Activated B cell treated with CpG ODN at 0.5 μM for 24 hours (primary cell): ENCODE measurements at regions of chr11 and their contacts with region 1.

Region 1: DNA sequence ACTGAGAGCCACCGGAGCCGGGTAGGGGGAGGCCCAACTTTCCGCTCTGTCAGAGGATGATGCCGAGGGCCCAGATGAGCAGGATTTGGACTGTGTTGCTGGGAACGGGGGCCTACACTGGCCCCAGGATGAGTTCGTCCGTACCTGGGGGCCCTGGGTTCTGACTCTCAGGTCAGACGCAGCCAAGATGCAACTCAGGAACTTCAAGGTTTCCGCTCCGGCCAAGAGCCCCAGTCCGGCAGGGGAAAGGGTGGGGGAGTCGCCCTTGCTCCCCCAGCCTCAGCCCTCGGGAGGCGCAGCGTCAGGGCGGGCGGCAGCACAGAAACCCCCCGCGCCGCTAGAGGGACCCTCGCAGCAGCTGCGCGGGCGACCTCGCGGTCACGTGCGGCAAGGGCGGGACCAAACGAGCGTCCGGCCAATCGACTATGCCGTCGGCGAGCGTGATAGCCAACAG is 241 bp upstream of the ARL2 start:
- DNase-seq: peak; percentile 84
- ATAC-seq: peak; percentile 83
- H3K4me3 Mint-ChIP-seq: peak overlapping the region; percentile 90
- H3K27ac Mint-ChIP-seq: peak overlapping the region; percentile 96
- H3K4me1 Mint-ChIP-seq: peaks cover 26% of the 10 kb centered on the region
- H3K27me3 Mint-ChIP-seq: no peaks in the 10 kb centered on the region
- CTCF ChIP-seq: no peak

Region 2: DNA sequence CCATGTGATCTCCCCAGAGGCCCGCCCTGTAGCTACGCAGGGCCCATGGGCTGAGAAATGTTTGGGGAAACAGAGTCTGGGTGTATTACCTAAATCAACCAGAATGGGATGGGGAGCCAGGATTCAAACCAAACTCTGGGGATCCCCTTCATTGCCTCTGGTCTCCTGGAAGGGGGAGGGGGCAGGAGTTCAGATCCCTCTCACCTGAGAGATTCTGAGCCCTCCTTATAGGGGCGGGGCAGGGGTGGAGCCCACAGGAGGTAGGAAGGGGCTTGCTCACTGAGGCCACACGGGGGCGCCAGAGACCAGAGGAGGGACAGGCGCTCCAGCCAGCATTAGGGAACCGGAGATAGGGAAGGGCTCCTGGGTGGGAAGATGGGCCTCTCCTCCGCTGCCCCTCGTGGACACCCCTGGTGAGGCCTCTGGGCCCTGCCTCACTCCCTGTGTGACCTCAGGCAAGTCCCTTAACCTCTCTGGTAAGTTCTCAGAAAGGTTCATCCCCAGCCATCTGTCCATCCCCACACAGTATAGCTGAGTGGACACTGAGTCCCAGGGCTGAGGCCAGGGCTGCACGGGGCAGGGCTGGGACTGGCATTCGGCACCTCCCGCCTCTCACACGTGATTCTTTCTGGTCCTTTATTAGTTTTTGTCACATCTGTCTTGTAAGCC is 166.6 kb before region 1 on chr11:
- CTCF ChIA-PET with region 1: interaction called, 15 read pairs
- POLR2A ChIA-PET with region 1: interaction called, 11 read pairs
- intact Hi-C with region 1: loop called (anchors 1 kb)
- DNase-seq: peak; percentile 90
- ATAC-seq: peak; percentile 21
- H3K4me3 Mint-ChIP-seq: no peak overlapping the region
- H3K27ac Mint-ChIP-seq: peak overlapping the region; percentile 61
- H3K4me1 Mint-ChIP-seq: peaks cover 64% of the 10 kb centered on the region
- H3K27me3 Mint-ChIP-seq: no peaks in the 10 kb centered on the region
- CTCF ChIP-seq: peak; percentile 46

Region 3: GRCh38 chr11:64971421-64972233 is 42.1 kb before region 1 on chr11 and contains the start of gene MAJIN:
- CTCF ChIA-PET with region 1: no interaction called
- POLR2A ChIA-PET with region 1: interaction called, 3 read pairs
- intact Hi-C with region 1: loop called (anchors 5 kb)
- DNase-seq: peak; percentile 83
- ATAC-seq: peak; percentile 77
- H3K4me3 Mint-ChIP-seq: peak within 1 kb of the TSS; percentile 80
- H3K27ac Mint-ChIP-seq: peak within 1 kb of the TSS; percentile 84
- H3K4me1 Mint-ChIP-seq: peaks cover 34% of the 10 kb centered on the region
- H3K27me3 Mint-ChIP-seq: no peaks in the 10 kb centered on the region
- CTCF ChIP-seq: no peak
- total RNA-seq, gene MAJIN: 0.20 and 1.5 TPM in 2 replicates

Region 4: GRCh38 chr11:65060913-65061408 is 47.2 kb after region 1 on chr11:
- CTCF ChIA-PET with region 1: no interaction called
- POLR2A ChIA-PET with region 1: no interaction called
- intact Hi-C with region 1: no loop called
- DNase-seq: no peak
- ATAC-seq: no peak
- H3K4me3 Mint-ChIP-seq: no peak overlapping the region
- H3K27ac Mint-ChIP-seq: no peak overlapping the region
- H3K4me1 Mint-ChIP-seq: no peaks in the 10 kb centered on the region
- H3K27me3 Mint-ChIP-seq: peaks cover 1% of the 10 kb centered on the region
- CTCF ChIP-seq: no peak

Region 5: DNA sequence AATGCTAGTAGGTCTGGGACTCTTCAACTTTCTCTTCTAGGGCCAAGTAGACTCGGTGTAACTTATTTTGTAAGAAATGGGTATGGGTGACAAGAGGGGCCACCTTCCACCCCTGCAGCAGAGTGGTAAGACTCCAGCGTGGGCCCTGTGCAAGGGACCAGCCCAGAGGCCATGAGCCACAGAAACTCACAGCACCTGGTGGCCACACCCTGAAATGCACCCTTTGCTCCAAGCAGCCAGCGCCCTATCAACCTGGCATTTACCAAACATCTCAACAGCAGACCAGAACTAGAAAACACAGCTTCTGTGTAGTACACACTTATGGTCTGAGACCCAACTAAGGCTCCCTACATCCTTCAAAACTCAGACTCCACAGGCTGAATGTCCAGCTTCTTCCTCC is 64.4 kb after region 1 on chr11:
- CTCF ChIA-PET with region 1: interaction called, 3 read pairs
- POLR2A ChIA-PET with region 1: no interaction called
- intact Hi-C with region 1: loop called (anchors 1 kb)
- DNase-seq: peak; percentile 51
- ATAC-seq: peak; percentile 99
- H3K4me3 Mint-ChIP-seq: no peak overlapping the region
- H3K27ac Mint-ChIP-seq: peak overlapping the region; percentile 41
- H3K4me1 Mint-ChIP-seq: peaks cover 10% of the 10 kb centered on the region
- H3K27me3 Mint-ChIP-seq: no peaks in the 10 kb centered on the region
- CTCF ChIP-seq: no peak

Region 6: DNA sequence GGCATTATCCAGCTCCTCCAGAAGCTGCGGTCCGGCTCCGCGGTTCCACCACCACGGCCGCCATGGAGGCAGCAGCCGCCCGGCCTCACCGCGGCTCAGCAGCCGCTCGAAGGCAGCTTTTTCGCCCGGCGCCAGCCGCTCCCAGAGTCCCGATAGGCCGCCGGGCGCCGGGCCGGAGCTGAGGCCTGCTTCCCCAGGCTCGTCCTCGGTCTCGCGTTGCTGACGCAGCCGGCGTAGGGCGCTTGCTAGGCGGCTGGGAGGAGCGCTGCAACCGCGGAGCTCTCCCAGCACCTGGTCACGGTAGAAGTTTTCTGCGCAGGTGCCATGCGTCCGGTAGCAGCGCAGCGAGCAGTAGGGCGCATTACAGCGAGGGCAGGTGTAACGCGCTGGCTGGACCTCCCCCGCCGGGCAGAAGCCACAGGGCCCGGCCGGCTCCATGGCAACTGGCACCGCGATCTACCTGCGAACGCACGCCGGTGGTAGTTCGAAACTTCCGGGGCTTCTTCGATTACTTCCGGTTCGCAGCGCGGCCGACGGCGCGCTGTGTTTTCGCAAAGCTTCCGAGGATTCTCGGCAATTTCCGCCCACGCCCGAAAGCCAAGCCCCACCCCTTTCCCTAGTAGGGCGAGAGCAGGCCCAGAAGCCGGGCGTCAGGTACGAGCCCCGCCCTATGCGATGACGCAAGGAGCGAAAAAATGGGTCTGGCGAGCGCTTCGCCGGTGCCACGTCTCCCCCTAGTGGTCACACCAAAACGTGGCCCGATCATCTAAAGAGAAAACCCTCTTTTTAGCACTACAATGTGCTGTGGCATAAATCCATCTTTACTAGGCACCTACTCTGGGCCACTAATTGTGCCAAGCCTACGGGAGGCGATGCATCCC is 103.7 kb after region 1 on chr11 and contains the start of gene ZNHIT2:
- CTCF ChIA-PET with region 1: interaction called, 12 read pairs
- POLR2A ChIA-PET with region 1: interaction called, 12 read pairs
- intact Hi-C with region 1: loop called (anchors 1 kb)
- DNase-seq: peak; percentile 98
- ATAC-seq: peak; percentile 70
- H3K4me3 Mint-ChIP-seq: peak within 1 kb of the TSS; percentile 87
- H3K27ac Mint-ChIP-seq: peak within 1 kb of the TSS; percentile 89
- H3K4me1 Mint-ChIP-seq: peaks cover 76% of the 10 kb centered on the region
- H3K27me3 Mint-ChIP-seq: no peaks in the 10 kb centered on the region
- CTCF ChIP-seq: peak; percentile 34
- total RNA-seq, gene ZNHIT2: 11.3 and 13.4 TPM in 2 replicates

Region 7: GRCh38 chr11:65314501-65315203 is 300.9 kb after region 1 on chr11 and contains the start of gene CDC42EP2:
- CTCF ChIA-PET with region 1: no interaction called
- POLR2A ChIA-PET with region 1: no interaction called
- intact Hi-C with region 1: loop called (anchors 1 kb)
- DNase-seq: peak; percentile 79
- ATAC-seq: peak; percentile 95
- H3K4me3 Mint-ChIP-seq: peak within 1 kb of the TSS; percentile 83
- H3K27ac Mint-ChIP-seq: no peak within 1 kb of the TSS
- H3K4me1 Mint-ChIP-seq: peaks cover 5% of the 10 kb centered on the region
- H3K27me3 Mint-ChIP-seq: peaks cover 8% of the 10 kb centered on the region
- CTCF ChIP-seq: no peak
- total RNA-seq, gene CDC42EP2: 0.18 and 0.83 TPM in 2 replicates